ENCODE measurements at regions of chr1 and their contacts with region 1.

Region 1: GRCh38 chr1:206612129-206612876 is at the start of gene EIF2D:
- DNase-seq: peak; percentile 93
- H3K4me3 ChIP-seq: peak within 1 kb of the TSS; percentile 69 to 89 (median 85)
- H3K27ac ChIP-seq: peak within 1 kb of the TSS; percentile 78
- H3K4me1 ChIP-seq: peaks cover 7% of the 10 kb centered on the region
- H3K27me3 ChIP-seq: peaks cover 4 to 13% of the 10 kb centered on the region in 2 experiments
- CTCF ChIP-seq: peak; percentile 91 to 96
- POLR2A ChIP-seq: peak; percentile 96
- total RNA-seq, gene EIF2D: 47.6 and 48.0 TPM in 2 replicates

Region 2: GRCh38 chr1:206419250-206419649 is 193.1 kb before region 1 on chr1:
- CTCF ChIA-PET with region 1: no interaction called
- POLR2A ChIA-PET with region 1: no interaction called
- dilution Hi-C with region 1: no loop called
- intact Hi-C with region 1: no loop called
- DNase-seq: no peak
- H3K4me3 ChIP-seq: no peak overlapping the region
- H3K27ac ChIP-seq: no peak overlapping the region
- H3K4me1 ChIP-seq: peaks cover 9% of the 10 kb centered on the region
- H3K27me3 ChIP-seq: no peaks in the 10 kb centered on the region
- CTCF ChIP-seq: no peak
- POLR2A ChIP-seq: no peak

Region 3: DNA sequence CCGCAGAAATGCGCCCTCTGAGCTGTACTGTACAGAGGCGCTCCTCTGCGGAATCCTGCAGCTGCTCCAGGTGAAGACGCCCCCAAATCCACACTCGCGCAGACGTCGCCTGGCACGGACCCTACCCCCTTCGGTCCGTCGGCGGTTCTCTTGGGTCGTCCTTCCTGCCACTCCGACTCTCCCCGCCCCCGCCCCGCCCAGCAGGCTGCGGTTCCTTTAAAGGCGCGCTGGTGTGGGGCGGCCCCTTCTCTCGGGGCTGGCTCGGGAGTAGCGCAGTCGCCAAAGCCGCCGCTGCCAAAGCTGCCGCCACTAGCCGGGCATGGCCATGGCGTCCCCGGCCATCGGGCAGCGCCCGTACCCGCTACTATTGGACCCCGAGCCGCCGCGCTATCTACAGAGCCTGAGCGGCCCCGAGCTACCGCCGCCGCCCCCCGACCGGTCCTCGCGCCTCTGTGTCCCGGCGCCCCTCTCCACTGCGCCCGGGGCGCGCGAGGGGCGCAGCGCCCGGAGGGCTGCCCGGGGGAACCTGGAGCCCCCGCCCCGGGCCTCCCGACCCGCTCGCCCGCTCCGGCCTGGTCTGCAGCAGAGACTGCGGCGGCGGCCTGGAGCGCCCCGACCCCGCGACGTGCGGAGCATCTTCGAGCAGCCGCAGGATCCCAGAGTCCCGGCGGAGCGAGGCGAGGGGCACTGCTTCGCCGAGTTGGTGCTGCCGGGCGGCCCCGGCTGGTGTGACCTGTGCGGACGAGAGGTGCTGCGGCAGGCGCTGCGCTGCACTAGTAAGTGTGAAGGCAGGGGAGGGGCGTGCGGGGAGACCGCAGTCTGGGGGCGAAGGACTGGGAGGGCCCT is 104.8 kb before region 1 on chr1 and contains the start of gene RASSF5:
- CTCF ChIA-PET with region 1: no interaction called
- POLR2A ChIA-PET with region 1: no interaction called
- dilution Hi-C with region 1: no loop called
- intact Hi-C with region 1: no loop called
- DNase-seq: peak; percentile 29
- H3K4me3 ChIP-seq: peak within 1 kb of the TSS in 1 of 3 experiments; percentile 27
- H3K27ac ChIP-seq: no peak within 1 kb of the TSS
- H3K4me1 ChIP-seq: no peaks in the 10 kb centered on the region
- H3K27me3 ChIP-seq: peaks cover 65 to 75% of the 10 kb centered on the region in 2 experiments
- CTCF ChIP-seq: no peak
- POLR2A ChIP-seq: no peak
- total RNA-seq, gene RASSF5: 0.44 and 0.60 TPM in 2 replicates

Region 4: DNA sequence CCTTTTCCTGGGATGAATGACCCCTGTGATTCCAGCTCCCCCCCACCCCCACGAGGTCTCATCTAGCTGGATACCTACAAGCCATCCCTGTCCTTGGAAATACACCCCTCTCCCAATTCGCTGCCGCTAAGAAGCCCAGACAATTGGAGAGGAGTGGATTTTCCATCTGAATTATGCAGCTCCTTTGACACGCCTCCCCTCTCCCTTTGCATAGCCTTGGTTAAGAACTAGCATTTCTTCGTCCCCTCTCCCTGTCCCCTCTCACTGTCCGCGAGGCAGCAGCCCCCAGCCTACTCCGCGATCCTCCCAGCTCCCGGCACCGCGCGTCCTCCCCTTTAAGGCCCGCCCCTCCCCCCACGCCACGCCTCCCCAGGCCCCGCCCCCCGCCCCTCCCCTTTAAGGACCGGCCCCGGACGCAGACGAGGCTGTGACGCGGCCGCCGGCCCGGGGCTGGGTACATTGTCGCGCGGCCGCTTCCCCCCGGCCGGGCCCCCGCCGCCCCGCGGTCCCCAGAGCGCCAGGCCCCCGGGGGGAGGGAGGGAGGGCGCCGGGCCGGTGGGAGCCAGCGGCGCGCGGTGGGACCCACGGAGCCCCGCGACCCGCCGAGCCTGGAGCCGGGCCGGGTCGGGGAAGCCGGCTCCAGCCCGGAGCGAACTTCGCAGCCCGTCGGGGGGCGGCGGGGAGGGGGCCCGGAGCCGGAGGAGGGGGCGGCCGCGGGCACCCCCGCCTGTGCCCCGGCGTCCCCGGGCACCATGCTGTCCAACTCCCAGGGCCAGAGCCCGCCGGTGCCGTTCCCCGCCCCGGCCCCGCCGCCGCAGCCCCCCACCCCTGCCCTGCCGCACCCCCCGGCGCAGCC is 72.4 kb after region 1 on chr1 and contains the start of gene MAPKAPK2:
- CTCF ChIA-PET with region 1: interaction called, 4 read pairs
- POLR2A ChIA-PET with region 1: no interaction called
- dilution Hi-C with region 1: no loop called
- intact Hi-C with region 1: loop called (anchors 1 kb)
- DNase-seq: peak; percentile 48
- H3K4me3 ChIP-seq: peak within 1 kb of the TSS; percentile 63 to 94 (median 93)
- H3K27ac ChIP-seq: peak within 1 kb of the TSS; percentile 85
- H3K4me1 ChIP-seq: peaks cover 28% of the 10 kb centered on the region
- H3K27me3 ChIP-seq: peaks cover 32 to 43% of the 10 kb centered on the region in 2 experiments
- CTCF ChIP-seq: no peak
- POLR2A ChIP-seq: no peak
- total RNA-seq, gene MAPKAPK2: 69.1 and 74.2 TPM in 2 replicates

Region 5: GRCh38 chr1:206706298-206706791 is 94.0 kb after region 1 on chr1:
- CTCF ChIA-PET with region 1: no interaction called
- POLR2A ChIA-PET with region 1: no interaction called
- dilution Hi-C with region 1: no loop called
- intact Hi-C with region 1: no loop called
- DNase-seq: no peak
- H3K4me3 ChIP-seq: no peak overlapping the region
- H3K27ac ChIP-seq: no peak overlapping the region
- H3K4me1 ChIP-seq: peaks cover 15% of the 10 kb centered on the region
- H3K27me3 ChIP-seq: no peaks in the 10 kb centered on the region
- CTCF ChIP-seq: no peak
- POLR2A ChIP-seq: no peak

Measured in endothelial cell of umbilical vein (primary cell).